T-cell (primary cell): ENCODE measurements at regions of chr12 and their contacts with region 1.

Region 1: DNA sequence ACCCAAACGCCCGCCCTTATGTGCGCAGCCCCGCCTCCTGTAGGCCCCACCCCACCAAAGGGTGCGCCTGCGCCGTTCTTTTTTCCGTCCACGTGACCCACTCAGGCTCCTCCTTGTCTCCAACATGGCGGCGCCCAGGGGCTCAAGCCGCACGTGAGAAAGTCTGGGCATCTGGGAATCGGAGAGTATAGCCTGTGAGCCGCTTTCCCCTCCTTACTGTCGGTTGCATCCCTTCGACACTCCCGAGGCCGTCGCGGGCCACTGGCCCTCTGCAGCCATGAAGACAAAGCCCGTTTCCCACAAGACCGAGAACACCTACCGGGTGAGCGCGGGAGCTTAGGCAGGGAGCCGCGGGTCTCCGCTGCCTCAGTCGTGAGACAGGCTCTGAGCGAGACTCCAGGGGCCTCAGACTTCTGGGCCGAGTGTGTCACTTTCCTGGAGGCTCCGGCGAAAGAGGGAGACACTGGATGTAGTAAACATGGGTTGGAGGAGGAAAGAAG is at the start of gene UTP20:
- DNase-seq: peak; percentile 73 to 95 (median 89)
- ATAC-seq: peak; percentile 99 to 100 (median 100)
- H3K4me3 ChIP-seq: peak within 1 kb of the TSS; percentile 90 to 100
- H3K4me3 Mint-ChIP-seq: peak within 1 kb of the TSS; percentile 94 to 96 (median 95)
- H3K27ac ChIP-seq: no peak within 1 kb of the TSS
- H3K27ac Mint-ChIP-seq: peak within 1 kb of the TSS; percentile 82 to 86
- H3K4me1 ChIP-seq: peaks cover 4 to 10% of the 10 kb centered on the region in 2 experiments
- H3K4me1 Mint-ChIP-seq: peaks cover 20 to 25% (median 22%) of the 10 kb centered on the region in 3 donors
- H3K27me3 ChIP-seq: peaks cover 0 to 6% of the 10 kb centered on the region in 2 experiments
- H3K27me3 Mint-ChIP-seq: peaks cover 8 to 14% of the 10 kb centered on the region in 2 donors
- total RNA-seq, gene UTP20: 12.7 to 16.9 (median 14.6) TPM

Region 2: DNA sequence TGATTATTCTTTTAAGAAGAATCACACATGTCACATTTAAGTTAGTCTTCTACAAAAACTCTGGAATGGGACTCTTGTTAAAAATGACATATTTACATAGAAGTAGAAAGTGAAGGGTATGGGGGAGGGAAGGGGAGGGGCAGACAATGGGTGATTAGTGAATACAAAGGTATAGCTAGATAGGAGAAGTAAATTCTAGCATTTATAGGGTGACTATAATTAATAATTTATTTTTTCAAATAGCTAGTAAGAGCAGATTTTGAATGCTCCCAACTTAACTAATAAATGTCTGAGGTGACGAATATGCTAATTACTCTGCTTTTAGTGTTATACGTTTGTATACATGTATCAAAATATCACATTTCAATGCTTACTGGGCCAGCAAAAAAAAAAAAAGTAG is 1196.7 kb before region 1 on chr12:
- CTCF ChIA-PET with region 1: no interaction called
- POLR2A ChIA-PET with region 1: no interaction called
- DNase-seq: no peak
- ATAC-seq: no peak
- H3K4me3 ChIP-seq: no peak overlapping the region
- H3K4me3 Mint-ChIP-seq: no peak overlapping the region
- H3K27ac ChIP-seq: no peak overlapping the region
- H3K27ac Mint-ChIP-seq: no peak overlapping the region
- H3K4me1 ChIP-seq: no peaks in the 10 kb centered on the region
- H3K4me1 Mint-ChIP-seq: no peaks in the 10 kb centered on the region
- H3K27me3 ChIP-seq: no peaks in the 10 kb centered on the region
- H3K27me3 Mint-ChIP-seq: no peaks in the 10 kb centered on the region

Region 3: DNA sequence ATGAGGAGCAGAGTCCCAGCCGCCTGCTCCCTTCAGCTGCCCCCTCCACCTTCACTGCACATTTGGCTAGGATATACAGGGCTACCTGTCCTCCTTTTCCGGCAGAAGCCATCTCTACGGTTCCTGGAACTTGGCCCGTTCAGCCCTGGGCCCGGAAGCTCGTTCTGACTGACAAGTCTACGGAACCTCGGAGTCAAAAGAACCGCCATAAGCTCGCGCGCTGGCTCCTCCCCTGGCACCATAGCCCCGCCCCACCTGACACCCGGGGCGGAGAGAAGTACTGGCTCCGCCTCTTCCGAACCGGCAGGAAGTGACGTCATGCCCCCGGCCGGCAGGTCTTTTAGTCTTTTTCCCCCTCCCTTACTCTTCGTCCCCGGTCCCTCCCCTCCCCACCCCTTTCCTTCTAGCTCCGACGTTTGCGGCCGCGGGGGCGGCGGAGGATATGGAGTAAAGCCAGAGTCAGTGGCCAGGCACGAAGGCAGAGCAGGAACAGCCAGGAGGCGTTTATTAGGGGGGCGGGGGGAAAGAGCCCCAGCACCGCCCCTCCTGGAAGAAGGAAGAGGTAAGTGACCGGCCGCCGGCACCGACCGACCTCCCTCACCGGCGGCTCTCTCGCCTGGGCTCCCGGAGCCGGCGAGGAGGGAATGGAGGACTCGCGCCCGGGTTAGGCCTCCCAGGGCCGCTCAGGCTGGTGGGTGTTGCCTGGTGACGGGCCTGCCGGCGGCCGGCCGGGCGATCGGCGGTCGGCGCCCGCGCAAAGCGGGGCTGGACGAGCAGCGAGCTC is 1013.0 kb before region 1 on chr12 and contains the starts of genes DEPDC4 and SCYL2:
- CTCF ChIA-PET with region 1: no interaction called
- POLR2A ChIA-PET with region 1: interaction called in 1 of 2 experiments, 12 read pairs
- DNase-seq: peak; percentile 81 to 97 (median 90)
- ATAC-seq: peak; percentile 90 to 95 (median 94)
- H3K4me3 ChIP-seq: peak within 1 kb of the TSS; percentile 80 to 93
- H3K4me3 Mint-ChIP-seq: peak within 1 kb of the TSS; percentile 97 to 99 (median 98)
- H3K27ac ChIP-seq: peak within 1 kb of the TSS; percentile 89
- H3K27ac Mint-ChIP-seq: peak within 1 kb of the TSS; percentile 94 to 98
- H3K4me1 ChIP-seq: peaks cover 10 to 18% of the 10 kb centered on the region in 2 experiments
- H3K4me1 Mint-ChIP-seq: peaks cover 34 to 45% (median 38%) of the 10 kb centered on the region in 3 donors
- H3K27me3 ChIP-seq: no peaks in the 10 kb centered on the region
- H3K27me3 Mint-ChIP-seq: no peaks in the 10 kb centered on the region
- total RNA-seq, gene DEPDC4: 0.38 to 0.93 (median 0.61) TPM in 4 of 5 donors, not detected in the other
- total RNA-seq, gene SCYL2: 33.1 to 43.4 (median 36.7) TPM